ENCODE measurements at regions of chr12 and their contacts with region 1.

Region 1: GRCh38 chr12:54032627-54033100 is at the start of gene HOXC5:
- DNase-seq: peak; percentile 50 to 68
- H3K4me3 ChIP-seq: peak within 1 kb of the TSS; percentile 47
- H3K27ac ChIP-seq: no peak within 1 kb of the TSS
- H3K4me1 ChIP-seq: 0 out of 2 replicates have a peak, but pooled peaks cover 5% of the 10 kb centered on the region
- H3K27me3 ChIP-seq: no peaks in the 10 kb centered on the region
- CTCF ChIP-seq: peak; percentile 98
- total RNA-seq, gene HOXC5: 0.61 and 1.8 TPM in 2 replicates

Region 2: GRCh38 chr12:54042970-54043853 is 10.5 kb after region 1 on chr12:
- CTCF ChIA-PET with region 1: interaction called, 13 read pairs
- POLR2A ChIA-PET with region 1: no interaction called
- intact Hi-C with region 1: no loop called
- DNase-seq: no peak
- H3K4me3 ChIP-seq: no peak overlapping the region
- H3K27ac ChIP-seq: no peak overlapping the region
- H3K4me1 ChIP-seq: no peaks in the 10 kb centered on the region
- H3K27me3 ChIP-seq: peaks cover 43% of the 10 kb centered on the region
- CTCF ChIP-seq: no peak

Region 3: GRCh38 chr12:54056110-54056835 is 23.6 kb after region 1 on chr12:
- CTCF ChIA-PET with region 1: interaction called, 15 read pairs
- POLR2A ChIA-PET with region 1: no interaction called
- intact Hi-C with region 1: no loop called
- DNase-seq: no peak
- H3K4me3 ChIP-seq: no peak overlapping the region
- H3K27ac ChIP-seq: no peak overlapping the region
- H3K4me1 ChIP-seq: no peaks in the 10 kb centered on the region
- H3K27me3 ChIP-seq: peaks cover 12% of the 10 kb centered on the region
- CTCF ChIP-seq: no peak

Region 4: GRCh38 chr12:54148560-54149429 is 116.1 kb after region 1 on chr12:
- CTCF ChIA-PET with region 1: interaction called, 11 read pairs
- POLR2A ChIA-PET with region 1: no interaction called
- intact Hi-C with region 1: no loop called
- DNase-seq: no peak
- H3K4me3 ChIP-seq: no peak overlapping the region
- H3K27ac ChIP-seq: no peak overlapping the region
- H3K4me1 ChIP-seq: no peaks in the 10 kb centered on the region
- H3K27me3 ChIP-seq: peaks cover 9% of the 10 kb centered on the region; the same call in 1 of the 2 replicates
- CTCF ChIP-seq: no peak

Region 5: GRCh38 chr12:54201001-54201794 is 168.5 kb after region 1 on chr12:
- CTCF ChIA-PET with region 1: interaction called, 12 read pairs
- POLR2A ChIA-PET with region 1: no interaction called
- intact Hi-C with region 1: loop called (anchors 2 kb)
- DNase-seq: peak; percentile 52 to 75
- H3K4me3 ChIP-seq: no peak overlapping the region
- H3K27ac ChIP-seq: no peak overlapping the region
- H3K4me1 ChIP-seq: 0 out of 2 replicates have a peak, but pooled peaks cover under 1% of the 10 kb centered on the region
- H3K27me3 ChIP-seq: no peaks in the 10 kb centered on the region
- CTCF ChIP-seq: peak; percentile 93

Region 6: DNA sequence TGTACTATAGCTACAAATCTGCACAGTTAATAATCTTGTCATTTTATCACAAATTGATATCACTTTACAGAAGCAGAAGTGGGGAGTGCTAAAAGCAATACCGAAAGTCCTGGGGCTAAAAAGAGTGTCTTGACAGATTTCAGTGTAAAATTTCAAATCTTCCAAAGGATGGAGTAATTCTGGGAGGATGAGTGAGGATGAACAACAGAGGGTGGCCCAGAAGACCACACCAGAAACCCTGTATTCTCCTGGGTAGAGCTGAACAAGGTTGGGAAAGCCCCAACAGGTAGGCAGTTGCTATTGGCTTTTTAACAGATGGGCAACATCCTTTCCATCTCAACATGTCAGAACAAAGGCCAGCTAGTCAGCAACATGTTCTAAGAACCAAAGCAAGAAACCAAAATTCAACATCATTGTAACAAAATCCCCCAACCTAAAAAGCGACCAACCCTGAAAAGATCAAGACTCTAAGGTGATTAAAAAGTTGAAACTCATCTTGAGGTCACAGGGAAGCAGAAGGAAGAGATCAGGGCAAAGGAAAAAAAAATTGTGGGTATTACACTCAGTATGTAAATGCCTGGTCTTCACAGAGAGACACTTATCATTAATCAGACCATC is 208.4 kb after region 1 on chr12:
- CTCF ChIA-PET with region 1: interaction called, 12 read pairs
- POLR2A ChIA-PET with region 1: no interaction called
- intact Hi-C with region 1: no loop called
- DNase-seq: no peak
- H3K4me3 ChIP-seq: no peak overlapping the region
- H3K27ac ChIP-seq: no peak overlapping the region
- H3K4me1 ChIP-seq: no peaks in the 10 kb centered on the region
- H3K27me3 ChIP-seq: no peaks in the 10 kb centered on the region
- CTCF ChIP-seq: no peak